K562 (cell line): ENCODE measurements at regions of chr7 and their contacts with region 1.

Region 1: GRCh38 chr7:92691578-92691977 is 101.4 kb upstream of the FAM133B start:
- DNase-seq: peak; percentile 26 to 43 (median 32)
- ATAC-seq: peak; percentile 86
- H3K4me3 ChIP-seq: no peak overlapping the region
- H3K27ac ChIP-seq: no peak overlapping the region
- H3K4me1 ChIP-seq: peaks cover 7 to 11% of the 10 kb centered on the region in 2 experiments; a peak in 3 of 5 replicates
- H3K27me3 ChIP-seq: no peaks in the 10 kb centered on the region
- CTCF ChIP-seq: peak; percentile 25 to 63 (median 28); a peak in 3 of 6 replicates
- EP300 ChIP-seq: no peak
- POLR2A ChIP-seq: no peak
- RAD21 ChIP-seq: peak; percentile 55 to 77

Region 2: GRCh38 chr7:92880212-92881090 is 188.9 kb after region 1 on chr7:
- CTCF ChIA-PET with region 1: interaction called, 6 read pairs
- POLR2A ChIA-PET with region 1: no interaction called
- in situ Hi-C with region 1: no loop called
- intact Hi-C with region 1: loop called (anchors 2 kb)
- DNase-seq: peak in 2 of 4 experiments; percentile 45 to 66
- ATAC-seq: peak; percentile 97
- H3K4me3 ChIP-seq: no peak overlapping the region
- H3K27ac ChIP-seq: no peak overlapping the region
- H3K4me1 ChIP-seq: no peaks in the 10 kb centered on the region
- H3K27me3 ChIP-seq: no peaks in the 10 kb centered on the region
- CTCF ChIP-seq: peak; percentile 53 to 72 (median 54)
- EP300 ChIP-seq: no peak
- POLR2A ChIP-seq: no peak
- RAD21 ChIP-seq: peak; percentile 31 to 81; a peak in 3 of 4 replicates

Region 3: GRCh38 chr7:92898798-92899197 is 207.2 kb after region 1 on chr7:
- CTCF ChIA-PET with region 1: no interaction called
- POLR2A ChIA-PET with region 1: no interaction called
- in situ Hi-C with region 1: no loop called
- intact Hi-C with region 1: no loop called
- DNase-seq: no peak
- ATAC-seq: no peak
- H3K4me3 ChIP-seq: no peak overlapping the region
- H3K27ac ChIP-seq: no peak overlapping the region
- H3K4me1 ChIP-seq: no peaks in the 10 kb centered on the region
- H3K27me3 ChIP-seq: no peaks in the 10 kb centered on the region
- CTCF ChIP-seq: no peak
- EP300 ChIP-seq: no peak
- POLR2A ChIP-seq: no peak
- RAD21 ChIP-seq: no peak